Activated T-helper 1 cell treated with anti-CD3 and anti-CD28 coated beads, Interleukin-12 subunit alpha, Interleukin-12 subunit beta, Interleukin-2, Interleukin-4 antibody, amounts not matched to agents 30 ng/mL and 10 ng/mL and 1 ng/mL, durations not matched to agents 14 hours and 24 hours and 36 hours (primary cell): ENCODE measurements at regions of chr1 and their contacts with region 1.

Region 1: DNA sequence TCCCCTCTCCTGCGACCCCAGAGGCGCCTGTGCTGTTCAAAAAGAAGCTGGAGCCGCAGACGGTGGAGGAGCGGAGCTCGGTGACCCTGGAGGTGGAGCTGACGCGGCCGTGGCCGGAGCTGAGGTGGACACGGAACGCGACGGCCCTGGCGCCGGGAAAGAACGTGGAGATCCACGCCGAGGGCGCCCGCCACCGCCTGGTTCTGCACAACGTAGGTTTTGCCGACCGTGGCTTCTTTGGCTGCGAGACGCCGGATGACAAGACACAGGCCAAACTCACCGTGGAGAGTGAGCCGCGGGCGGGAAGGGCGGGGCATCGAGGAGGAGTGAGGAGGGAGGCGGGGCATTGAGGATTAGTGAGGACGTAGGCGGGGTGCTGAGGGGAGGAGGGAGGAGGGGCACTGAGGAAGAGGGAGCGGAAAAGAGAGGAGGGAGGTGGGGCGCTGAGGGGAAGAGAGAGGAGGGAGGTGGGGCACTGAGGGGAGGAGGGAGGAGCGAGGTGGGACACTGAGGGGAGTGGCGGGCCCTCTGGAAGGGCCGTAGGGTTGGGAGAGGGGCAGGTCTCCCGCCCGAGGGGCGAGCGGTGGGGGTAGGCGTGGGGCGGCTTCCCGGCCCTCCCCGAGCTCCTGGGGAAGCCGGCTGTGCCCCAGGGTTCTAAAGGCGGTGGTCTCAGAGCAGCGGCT is 68.0 kb downstream of the OBSCN start:
- DNase-seq: peak; percentile 83
- H3K4me3 Mint-ChIP-seq: peak overlapping the region; percentile 73
- H3K27ac Mint-ChIP-seq: no peak overlapping the region
- H3K4me1 Mint-ChIP-seq: peaks cover 8% of the 10 kb centered on the region
- H3K27me3 Mint-ChIP-seq: no peaks in the 10 kb centered on the region

Region 2: DNA sequence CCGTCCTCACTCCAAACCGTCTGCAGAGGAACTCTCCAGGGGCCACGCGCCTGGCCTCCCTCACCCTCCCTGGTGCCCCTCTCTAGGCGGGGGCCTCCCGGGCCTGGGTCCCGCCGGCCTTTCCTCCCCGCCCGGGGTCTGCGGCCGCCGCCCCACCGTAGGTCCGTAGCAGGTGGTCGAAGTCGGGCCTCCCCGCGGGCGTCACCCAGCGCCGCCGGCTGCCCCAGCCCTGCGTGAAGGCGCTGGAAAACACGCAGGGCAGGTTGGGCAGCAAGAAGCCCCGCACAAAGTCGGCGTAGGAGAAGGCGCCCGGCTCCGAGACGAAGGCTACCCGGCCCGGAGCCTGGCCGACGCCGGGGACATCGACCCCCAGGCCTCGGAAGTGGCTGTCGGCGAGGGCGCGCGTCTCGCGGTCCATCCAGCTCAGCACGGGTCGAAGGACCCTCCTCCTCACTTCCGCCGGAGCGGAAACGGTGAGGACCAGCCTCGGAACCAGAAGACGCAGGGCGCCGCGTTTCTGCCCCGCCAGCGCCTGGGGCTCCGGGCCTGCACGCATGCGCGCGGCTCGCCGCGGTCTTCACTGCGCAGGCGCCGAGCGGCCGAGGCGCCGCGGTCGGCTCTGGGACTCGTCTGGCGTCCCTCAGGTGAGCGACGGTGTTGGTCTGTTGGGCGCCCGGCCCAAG is 540.9 kb before region 1 on chr1 and contains the starts of genes JMJD4 and SNAP47:
- intact Hi-C with region 1: loop called (anchors 10 kb)
- DNase-seq: peak; percentile 93
- H3K4me3 Mint-ChIP-seq: peak within 1 kb of the TSS; percentile 98
- H3K27ac Mint-ChIP-seq: peak within 1 kb of the TSS; percentile 97
- H3K4me1 Mint-ChIP-seq: peaks cover 25% of the 10 kb centered on the region
- H3K27me3 Mint-ChIP-seq: no peaks in the 10 kb centered on the region
- total RNA-seq, gene JMJD4: 33.9 and 37.5 TPM in 2 replicates
- total RNA-seq, gene SNAP47: 32.2 and 33.7 TPM in 2 replicates

Region 3: GRCh38 chr1:227961651-227962225 is 314.1 kb before region 1 on chr1:
- intact Hi-C with region 1: no loop called
- DNase-seq: no peak
- H3K4me3 Mint-ChIP-seq: no peak overlapping the region
- H3K27ac Mint-ChIP-seq: no peak overlapping the region
- H3K4me1 Mint-ChIP-seq: no peaks in the 10 kb centered on the region
- H3K27me3 Mint-ChIP-seq: peaks cover 6% of the 10 kb centered on the region

Region 4: DNA sequence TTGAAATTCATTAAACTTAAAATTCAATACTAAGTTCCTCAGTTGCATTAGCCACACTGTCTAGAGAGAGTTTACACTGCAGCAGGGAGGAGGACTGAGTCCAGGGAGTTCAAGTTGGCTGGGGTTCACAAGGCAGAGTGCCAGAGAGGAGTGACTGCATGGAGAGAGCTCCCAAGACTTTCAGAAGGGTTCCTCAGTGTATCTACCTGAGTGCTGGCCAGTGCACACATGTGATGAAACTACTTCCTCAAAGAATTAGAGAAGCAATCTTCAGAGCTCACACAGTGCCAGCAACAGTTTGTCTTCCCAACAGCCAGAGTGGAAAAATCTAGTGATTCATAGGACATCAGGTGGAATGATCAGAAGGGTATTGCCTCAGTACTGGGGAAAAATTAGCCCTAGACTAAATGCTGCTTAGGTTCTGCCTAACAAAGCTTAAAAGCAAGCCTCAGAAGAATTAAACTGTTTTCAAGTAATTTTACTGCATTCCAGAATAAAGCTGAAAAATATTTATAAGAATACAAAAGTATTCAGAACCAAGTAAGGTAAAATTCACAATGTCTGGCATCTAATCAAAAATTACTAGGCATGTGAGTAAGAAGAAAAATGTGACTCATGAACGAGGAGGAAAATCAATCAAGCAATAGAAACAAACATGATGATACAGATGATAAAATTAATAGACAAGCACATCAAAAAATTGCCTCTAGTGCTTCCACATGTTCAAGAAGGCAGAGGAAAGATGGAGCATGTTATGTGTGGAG is 279.5 kb before region 1 on chr1:
- intact Hi-C with region 1: no loop called
- DNase-seq: no peak
- H3K4me3 Mint-ChIP-seq: no peak overlapping the region
- H3K27ac Mint-ChIP-seq: no peak overlapping the region
- H3K4me1 Mint-ChIP-seq: no peaks in the 10 kb centered on the region
- H3K27me3 Mint-ChIP-seq: peaks cover 10% of the 10 kb centered on the region

Region 5: DNA sequence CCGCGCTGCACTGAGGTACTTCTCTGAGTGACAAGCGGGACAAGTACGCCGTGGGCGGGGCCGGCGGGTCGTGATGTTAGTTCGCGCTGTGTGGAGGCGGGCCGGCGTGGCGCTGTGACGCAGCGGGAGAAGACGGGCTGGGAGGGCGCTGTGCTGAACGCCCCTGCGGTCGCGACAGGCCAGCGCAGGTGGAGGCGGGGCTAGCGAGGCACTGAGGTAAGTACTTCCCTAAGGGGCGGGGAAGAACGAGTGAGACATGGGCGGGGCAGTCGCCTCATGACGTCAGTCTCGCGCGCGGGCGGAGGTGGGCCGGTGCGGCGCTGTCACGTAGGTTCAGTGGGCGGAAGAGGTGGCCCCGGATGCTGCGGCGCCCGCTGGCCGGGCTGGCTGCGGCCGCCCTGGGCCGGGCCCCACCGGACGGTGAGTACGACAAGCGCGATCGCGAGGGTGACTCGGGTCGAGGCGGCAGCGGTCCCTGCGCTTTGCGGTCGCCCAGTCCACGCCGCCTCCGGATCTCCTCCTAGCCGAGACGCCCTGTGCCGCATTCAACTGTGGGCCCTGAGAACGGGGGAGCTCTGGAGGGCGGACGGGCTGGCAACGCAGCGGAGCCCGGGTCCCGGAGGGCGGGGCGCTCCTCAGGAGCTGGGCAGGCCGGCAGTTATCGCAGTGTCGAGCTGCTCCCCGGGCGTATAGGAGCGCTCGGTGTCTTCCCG is 135.8 kb before region 1 on chr1 and contains the start of gene GUK1:
- intact Hi-C with region 1: loop called (anchors 1 kb)
- DNase-seq: peak; percentile 100
- H3K4me3 Mint-ChIP-seq: peak within 1 kb of the TSS; percentile 100
- H3K27ac Mint-ChIP-seq: peak within 1 kb of the TSS; percentile 97
- H3K4me1 Mint-ChIP-seq: peaks cover 22% of the 10 kb centered on the region
- H3K27me3 Mint-ChIP-seq: peaks cover 21% of the 10 kb centered on the region
- total RNA-seq, gene GUK1: 201 and 202 TPM in 2 replicates

Region 6: DNA sequence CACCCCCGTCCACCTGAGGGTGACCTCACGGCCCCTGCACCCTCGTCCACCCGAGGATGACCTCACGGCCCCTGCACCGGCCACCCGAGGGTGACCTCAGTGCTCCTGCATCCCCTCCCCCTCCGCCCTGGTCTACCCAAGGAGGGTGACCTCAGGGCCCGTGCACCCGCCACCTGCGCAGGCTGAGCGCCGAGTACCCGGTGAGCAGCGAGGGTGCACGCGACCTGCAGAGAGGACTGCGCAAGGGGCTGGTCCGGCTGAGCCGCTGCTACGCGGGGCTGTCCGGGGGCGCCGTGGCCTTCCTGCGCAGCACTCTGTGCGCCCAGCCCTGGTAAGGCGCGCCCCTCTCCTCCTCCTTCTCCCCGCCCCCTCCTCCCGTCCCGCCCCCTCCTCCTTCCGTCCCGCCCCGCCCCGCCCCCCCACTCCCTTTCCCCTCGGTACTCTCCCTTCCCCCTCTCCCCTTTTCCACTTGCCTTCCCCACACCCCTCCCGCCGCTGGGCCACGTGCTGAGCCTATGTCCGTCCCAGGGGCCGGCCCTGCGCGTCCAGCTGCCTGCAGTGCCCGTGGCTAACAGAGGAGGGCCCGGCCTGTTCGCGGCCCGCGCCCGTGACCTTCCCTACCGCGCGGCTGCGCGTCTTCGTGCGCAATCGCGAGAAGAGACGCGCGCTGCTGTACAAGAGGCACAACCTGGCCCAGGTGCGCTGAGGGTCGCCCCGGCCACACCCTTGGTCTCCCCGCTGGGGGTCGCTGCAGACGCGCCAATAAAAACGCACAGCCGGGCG is 102.4 kb after region 1 on chr1:
- intact Hi-C with region 1: loop called (anchors 1 kb)
- DNase-seq: peak; percentile 41
- H3K4me3 Mint-ChIP-seq: peak overlapping the region; percentile 79
- H3K27ac Mint-ChIP-seq: no peak overlapping the region
- H3K4me1 Mint-ChIP-seq: no peaks in the 10 kb centered on the region
- H3K27me3 Mint-ChIP-seq: peaks cover 25% of the 10 kb centered on the region

Region 7: GRCh38 chr1:228486596-228487335 is 210.9 kb after region 1 on chr1:
- intact Hi-C with region 1: loop called (anchors 5 kb)
- DNase-seq: peak; percentile 84
- H3K4me3 Mint-ChIP-seq: peak overlapping the region; percentile 97
- H3K27ac Mint-ChIP-seq: peak overlapping the region; percentile 99
- H3K4me1 Mint-ChIP-seq: peaks cover 29% of the 10 kb centered on the region
- H3K27me3 Mint-ChIP-seq: peaks cover 7% of the 10 kb centered on the region